ENCODE measurements at regions of chr6 and their contacts with region 1.

Region 1: GRCh38 chr6:138001750-138002349 is 105.4 kb downstream of the PERP start:
- DNase-seq: no peak
- ATAC-seq: peak; percentile 81
- H3K4me3 ChIP-seq: no peak overlapping the region
- H3K27ac ChIP-seq: no peak overlapping the region
- H3K4me1 ChIP-seq: no peaks in the 10 kb centered on the region
- H3K27me3 ChIP-seq: no peaks in the 10 kb centered on the region
- CTCF ChIP-seq: peak; percentile 91

Region 2: DNA sequence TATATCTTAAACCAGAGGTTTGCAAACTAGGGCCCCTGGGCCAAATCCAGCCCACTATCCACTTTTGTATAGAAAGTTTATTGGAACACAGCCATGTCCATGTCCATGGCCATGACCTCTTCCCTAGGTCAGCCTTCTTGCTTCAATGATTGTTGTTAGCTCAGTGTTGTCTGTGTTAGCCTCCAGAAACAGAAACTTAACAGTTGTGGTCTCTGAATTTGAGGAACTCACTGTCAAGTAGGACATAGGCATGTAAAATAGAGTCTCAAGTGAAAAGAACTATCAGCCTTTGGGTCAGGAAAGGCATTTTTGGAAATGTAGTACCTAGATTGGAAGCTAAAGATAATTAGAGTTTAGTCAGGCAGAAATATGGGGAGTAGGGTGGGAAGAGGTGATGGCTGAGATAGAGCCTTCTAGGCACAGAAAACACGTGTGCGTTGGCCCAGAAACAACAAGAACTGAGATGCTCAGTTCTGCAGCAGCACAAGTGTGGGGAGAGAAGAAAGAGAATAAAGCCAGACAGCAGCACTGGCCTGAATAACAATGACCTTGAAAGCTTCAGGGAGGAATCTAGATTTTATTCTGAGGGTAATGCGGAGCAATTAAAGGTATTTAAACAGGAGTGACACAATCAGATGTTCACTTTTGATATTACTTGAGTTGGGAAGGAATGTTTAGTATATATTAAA is 420.7 kb before region 1 on chr6:
- intact Hi-C with region 1: no loop called
- DNase-seq: no peak
- ATAC-seq: peak; percentile 57
- H3K4me3 ChIP-seq: no peak overlapping the region
- H3K27ac ChIP-seq: no peak overlapping the region
- H3K4me1 ChIP-seq: no peaks in the 10 kb centered on the region
- H3K27me3 ChIP-seq: no peaks in the 10 kb centered on the region
- CTCF ChIP-seq: no peak

Region 3: GRCh38 chr6:138109042-138109997 is 107.5 kb after region 1 on chr6:
- intact Hi-C with region 1: loop called (anchors 5 kb)
- DNase-seq: no peak
- ATAC-seq: peak; percentile 65
- H3K4me3 ChIP-seq: no peak overlapping the region
- H3K27ac ChIP-seq: no peak overlapping the region
- H3K4me1 ChIP-seq: no peaks in the 10 kb centered on the region
- H3K27me3 ChIP-seq: peaks cover 23% of the 10 kb centered on the region
- CTCF ChIP-seq: peak; percentile 97